Activated CD4-positive, alpha-beta T cell treated with anti-CD3 and anti-CD28 coated beads, Interleukin-2, amount 10 ng/mL, durations not matched to agents 24 days and 14 days (primary cell): ENCODE measurements at regions of chr2 and their contacts with region 1.

Region 1: GRCh38 chr2:86035883-86036668 is 69.6 kb downstream of the POLR1A start:
- DNase-seq: peak; percentile 90
- H3K4me3 Mint-ChIP-seq: peak overlapping the region; percentile 79
- H3K27ac Mint-ChIP-seq: peak overlapping the region; percentile 95
- H3K4me1 Mint-ChIP-seq: peaks cover 64% of the 10 kb centered on the region
- H3K27me3 Mint-ChIP-seq: no peaks in the 10 kb centered on the region

Region 2: GRCh38 chr2:85826990-85827878 is 208.8 kb before region 1 on chr2:
- intact Hi-C with region 1: loop called (anchors 1 kb)
- DNase-seq: peak; percentile 95
- H3K4me3 Mint-ChIP-seq: peak overlapping the region; percentile 5
- H3K27ac Mint-ChIP-seq: no peak overlapping the region
- H3K4me1 Mint-ChIP-seq: peaks cover 31% of the 10 kb centered on the region
- H3K27me3 Mint-ChIP-seq: peaks cover 23% of the 10 kb centered on the region

Region 3: DNA sequence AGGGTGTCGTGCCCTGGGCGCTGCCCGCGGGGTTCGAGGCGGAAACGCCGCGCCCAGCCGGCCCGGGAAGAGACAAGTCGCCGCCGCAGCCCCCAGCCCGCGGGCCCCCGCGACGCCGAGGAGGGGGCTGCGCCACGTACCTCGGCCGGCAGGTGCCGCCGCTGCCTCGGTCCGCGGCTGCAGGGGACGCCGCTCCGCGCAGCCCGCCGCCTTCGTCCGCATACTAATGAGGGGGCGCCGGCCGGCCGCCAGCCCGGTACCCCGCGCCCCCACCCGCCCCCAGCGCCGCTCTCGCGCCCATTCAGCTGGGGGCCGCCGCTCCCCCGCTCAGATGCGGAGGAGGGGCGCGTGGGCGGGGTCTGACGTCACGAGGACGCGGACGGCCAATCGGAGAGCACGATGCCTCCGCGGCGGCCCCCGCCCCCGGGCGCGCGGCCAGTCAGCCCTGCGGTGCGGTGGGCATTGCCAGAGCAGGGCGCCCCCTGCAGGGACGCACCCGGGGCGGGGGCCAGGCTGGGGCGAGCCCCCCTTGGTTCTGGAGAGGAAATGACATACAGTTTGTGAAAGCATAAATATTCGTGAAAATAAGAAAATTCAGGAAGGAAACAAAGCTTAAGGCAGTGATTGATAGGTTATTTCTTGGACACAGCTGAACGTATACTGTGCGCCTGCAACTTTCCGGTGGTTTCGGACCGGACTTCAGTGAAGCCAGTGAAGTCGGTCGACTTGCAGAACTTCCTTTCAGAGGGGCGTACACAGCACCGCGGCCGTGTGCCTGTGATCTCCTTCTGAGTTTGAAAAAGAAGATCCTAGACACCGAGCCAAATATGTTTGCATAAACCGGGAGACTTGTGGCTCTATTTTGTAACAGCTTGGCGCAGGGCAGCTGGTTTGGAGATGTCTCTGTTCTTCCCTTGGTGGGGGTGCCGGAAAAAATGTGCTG is 147.1 kb before region 1 on chr2 and contains the start of gene ST3GAL5:
- intact Hi-C with region 1: loop called (anchors 1 kb)
- DNase-seq: peak; percentile 98
- H3K4me3 Mint-ChIP-seq: peak within 1 kb of the TSS; percentile 89
- H3K27ac Mint-ChIP-seq: peak within 1 kb of the TSS; percentile 90
- H3K4me1 Mint-ChIP-seq: peaks cover 63% of the 10 kb centered on the region
- H3K27me3 Mint-ChIP-seq: peaks cover 4% of the 10 kb centered on the region
- total RNA-seq, gene ST3GAL5: 13.3 and 14.6 TPM in 2 replicates

Region 4: DNA sequence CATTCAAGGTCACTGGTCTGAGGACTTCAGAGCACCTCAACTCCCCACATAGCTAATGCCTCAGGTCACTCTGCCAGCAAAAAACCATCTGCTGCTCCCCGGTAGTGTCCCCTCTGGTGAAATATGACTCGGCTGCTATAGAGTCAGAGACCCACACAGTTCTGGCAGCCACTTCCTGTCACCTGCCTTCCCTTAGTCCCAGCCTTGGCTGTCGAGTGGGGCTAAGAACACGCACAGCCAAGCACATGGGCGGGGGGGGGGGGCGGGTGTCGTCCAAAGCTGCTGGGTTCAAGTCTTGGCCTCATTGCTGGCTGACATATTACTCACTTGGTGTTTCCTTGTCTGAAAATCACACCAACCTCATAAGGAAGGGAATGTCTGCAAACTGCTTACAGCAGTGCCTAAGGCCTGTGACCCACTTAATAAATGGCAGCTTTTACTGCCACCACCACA is 32.1 kb after region 1 on chr2:
- intact Hi-C with region 1: loop called (anchors 2 kb)
- DNase-seq: peak; percentile 82
- H3K4me3 Mint-ChIP-seq: peak overlapping the region; percentile 24
- H3K27ac Mint-ChIP-seq: peak overlapping the region; percentile 20
- H3K4me1 Mint-ChIP-seq: peaks cover 27% of the 10 kb centered on the region
- H3K27me3 Mint-ChIP-seq: no peaks in the 10 kb centered on the region

Region 5: GRCh38 chr2:86105252-86105968 is 69.3 kb after region 1 on chr2 and contains the start of gene POLR1A:
- intact Hi-C with region 1: loop called (anchors 2 kb)
- DNase-seq: peak; percentile 95
- H3K4me3 Mint-ChIP-seq: peak within 1 kb of the TSS; percentile 94
- H3K27ac Mint-ChIP-seq: peak within 1 kb of the TSS; percentile 96
- H3K4me1 Mint-ChIP-seq: peaks cover 43% of the 10 kb centered on the region
- H3K27me3 Mint-ChIP-seq: no peaks in the 10 kb centered on the region
- total RNA-seq, gene POLR1A: 66.8 and 73.5 TPM in 2 replicates